K562 (cell line): ENCODE measurements at regions of chr4 and their contacts with region 1.

Region 1: DNA sequence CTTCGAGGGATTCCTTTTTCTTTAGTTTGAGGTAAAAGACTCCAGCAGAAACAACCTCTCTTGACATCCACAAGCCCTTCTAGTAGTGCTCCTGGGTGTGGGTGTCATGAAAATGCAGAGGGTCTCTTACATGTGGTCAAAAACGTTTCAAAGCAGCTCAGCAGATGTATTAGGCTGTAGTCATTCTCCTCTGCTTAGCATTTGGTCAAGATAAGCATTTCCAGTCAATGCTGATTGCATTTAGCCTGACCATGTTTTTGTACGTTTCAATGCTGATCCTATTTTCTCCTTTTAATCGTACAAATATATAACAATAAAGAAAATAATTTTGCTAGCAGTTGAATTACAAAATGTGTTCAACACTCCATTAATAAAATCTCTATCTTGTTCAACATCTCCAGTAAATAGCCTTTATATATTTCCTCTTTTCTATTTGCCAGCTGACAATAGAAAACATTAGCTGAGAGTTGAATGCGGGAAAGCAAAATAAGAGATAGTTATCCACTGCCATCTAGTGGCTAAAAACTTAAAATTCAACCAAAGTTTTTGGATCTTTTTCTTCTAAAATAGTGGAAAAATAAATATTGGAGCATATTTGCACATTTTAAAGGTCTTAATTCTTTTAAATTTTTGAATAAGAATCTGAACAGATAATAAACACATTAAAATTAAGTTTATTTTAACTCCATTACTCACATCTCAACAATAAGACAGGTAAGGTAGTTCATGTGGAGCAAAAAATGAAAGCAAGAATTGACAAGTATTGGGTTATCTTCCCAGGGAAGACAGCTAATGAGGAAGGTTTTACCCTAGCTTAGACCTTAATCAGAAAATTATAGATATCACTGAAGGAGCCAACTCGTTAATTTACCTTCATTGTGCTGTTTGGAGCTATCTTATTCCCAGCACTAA is 15.2 kb upstream of the PACRGL start:
- DNase-seq: peak; percentile 16 to 29 (median 24)
- ATAC-seq: 0 out of 3 replicates have a peak, but pooled peaks have one; percentile 39
- H3K4me3 ChIP-seq: no peak overlapping the region
- H3K27ac ChIP-seq: no peak overlapping the region
- H3K4me1 ChIP-seq: no peaks in the 10 kb centered on the region
- H3K27me3 ChIP-seq: no peaks in the 10 kb centered on the region; a peak in 1 of 5 replicates
- CTCF ChIP-seq: peak in 2 of 3 experiments; percentile 33 to 72; a peak in 3 of 6 replicates
- EP300 ChIP-seq: no peak
- POLR2A ChIP-seq: no peak
- RAD21 ChIP-seq: peak; percentile 68 to 69

Region 2: DNA sequence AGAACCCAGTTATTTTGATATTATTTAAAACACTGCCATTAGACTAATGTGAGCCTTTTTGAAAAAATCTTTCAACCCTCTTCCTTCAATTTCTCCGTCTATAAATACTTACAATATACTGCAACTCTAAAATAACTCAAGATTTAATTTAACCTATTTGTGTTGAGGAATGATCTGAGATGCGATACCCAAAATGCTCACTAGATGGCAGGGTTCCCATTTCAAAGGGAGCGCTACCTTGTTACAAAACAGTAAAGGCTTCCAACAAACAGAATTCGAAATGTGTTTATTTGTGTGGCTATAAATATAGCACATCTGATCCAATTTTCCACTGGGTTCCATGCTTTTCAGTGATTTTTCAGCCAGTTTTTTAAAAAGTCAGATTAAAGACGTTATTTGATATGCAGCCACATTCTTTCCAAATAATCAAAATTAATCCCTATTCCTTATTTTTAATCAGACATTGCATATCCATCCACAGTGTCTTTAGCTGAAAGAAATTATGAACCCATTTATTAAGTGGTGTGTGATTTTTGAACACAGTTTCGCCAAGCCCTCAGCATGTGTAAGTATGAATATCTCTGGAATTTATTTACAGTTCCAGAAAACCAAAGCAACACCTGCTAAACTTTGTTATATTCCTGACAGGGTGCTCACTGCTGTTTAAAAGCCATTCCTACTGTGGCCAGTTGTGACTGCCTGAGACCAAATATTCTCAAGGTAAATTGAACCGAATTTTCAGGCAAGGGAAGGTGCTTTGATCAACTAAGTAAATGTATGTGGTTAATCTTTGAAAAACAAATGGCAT is 1995.6 kb before region 1 on chr4:
- CTCF ChIA-PET with region 1: interaction called, 3 read pairs
- POLR2A ChIA-PET with region 1: no interaction called
- in situ Hi-C with region 1: loop called (anchors 25 kb)
- intact Hi-C with region 1: loop called (anchors 2 kb)
- DNase-seq: peak; percentile 20 to 54 (median 26)
- ATAC-seq: peak; percentile 57; the same call in 1 of the 3 replicates
- H3K4me3 ChIP-seq: no peak overlapping the region
- H3K27ac ChIP-seq: no peak overlapping the region
- H3K4me1 ChIP-seq: no peaks in the 10 kb centered on the region
- H3K27me3 ChIP-seq: no peaks in the 10 kb centered on the region
- CTCF ChIP-seq: peak; percentile 50 to 77 (median 59)
- EP300 ChIP-seq: no peak
- POLR2A ChIP-seq: no peak
- RAD21 ChIP-seq: peak; percentile 72 to 83

Region 3: GRCh38 chr4:19224820-19225219 is 1460.3 kb before region 1 on chr4:
- CTCF ChIA-PET with region 1: no interaction called
- POLR2A ChIA-PET with region 1: no interaction called
- in situ Hi-C with region 1: loop called (anchors 5 kb)
- intact Hi-C with region 1: loop called (anchors 5 kb)
- DNase-seq: peak in 2 of 4 experiments; percentile 3 to 6
- ATAC-seq: no peak
- H3K4me3 ChIP-seq: no peak overlapping the region
- H3K27ac ChIP-seq: no peak overlapping the region
- H3K4me1 ChIP-seq: no peaks in the 10 kb centered on the region
- H3K27me3 ChIP-seq: no peaks in the 10 kb centered on the region
- CTCF ChIP-seq: peak in 1 of 3 experiments; percentile 24; a peak in 2 of 6 replicates
- EP300 ChIP-seq: no peak
- POLR2A ChIP-seq: no peak
- RAD21 ChIP-seq: peak; percentile 24 to 35; a peak in 2 of 4 replicates

Region 4: DNA sequence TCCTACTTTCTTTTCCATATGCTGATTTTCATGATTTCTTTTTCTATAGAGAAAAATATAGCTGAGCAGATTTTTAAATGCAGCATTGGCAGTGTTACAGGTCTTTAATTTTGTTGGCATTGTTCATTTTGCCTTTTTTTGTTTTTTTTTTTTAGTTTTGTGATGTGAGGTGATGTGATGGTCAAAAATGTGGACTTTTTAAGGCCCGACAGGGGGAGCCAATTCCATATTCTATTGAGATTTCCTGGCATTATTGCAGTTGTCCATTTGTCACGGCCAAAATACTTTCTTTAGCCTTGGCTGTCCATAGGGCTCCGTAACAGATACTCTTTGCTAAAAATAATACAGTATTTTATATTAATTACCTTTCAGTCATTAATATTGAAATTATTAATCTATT is 385.6 kb before region 1 on chr4:
- CTCF ChIA-PET with region 1: interaction called, 5 read pairs
- POLR2A ChIA-PET with region 1: no interaction called
- in situ Hi-C with region 1: no loop called
- intact Hi-C with region 1: loop called (anchors 10 kb)
- DNase-seq: peak in 2 of 4 experiments; percentile 8 to 13
- ATAC-seq: no peak
- H3K4me3 ChIP-seq: no peak overlapping the region
- H3K27ac ChIP-seq: no peak overlapping the region
- H3K4me1 ChIP-seq: no peaks in the 10 kb centered on the region
- H3K27me3 ChIP-seq: no peaks in the 10 kb centered on the region
- CTCF ChIP-seq: peak in 1 of 3 experiments; percentile 24; a peak in 1 of 6 replicates
- EP300 ChIP-seq: no peak
- POLR2A ChIP-seq: no peak
- RAD21 ChIP-seq: no peak

Region 5: DNA sequence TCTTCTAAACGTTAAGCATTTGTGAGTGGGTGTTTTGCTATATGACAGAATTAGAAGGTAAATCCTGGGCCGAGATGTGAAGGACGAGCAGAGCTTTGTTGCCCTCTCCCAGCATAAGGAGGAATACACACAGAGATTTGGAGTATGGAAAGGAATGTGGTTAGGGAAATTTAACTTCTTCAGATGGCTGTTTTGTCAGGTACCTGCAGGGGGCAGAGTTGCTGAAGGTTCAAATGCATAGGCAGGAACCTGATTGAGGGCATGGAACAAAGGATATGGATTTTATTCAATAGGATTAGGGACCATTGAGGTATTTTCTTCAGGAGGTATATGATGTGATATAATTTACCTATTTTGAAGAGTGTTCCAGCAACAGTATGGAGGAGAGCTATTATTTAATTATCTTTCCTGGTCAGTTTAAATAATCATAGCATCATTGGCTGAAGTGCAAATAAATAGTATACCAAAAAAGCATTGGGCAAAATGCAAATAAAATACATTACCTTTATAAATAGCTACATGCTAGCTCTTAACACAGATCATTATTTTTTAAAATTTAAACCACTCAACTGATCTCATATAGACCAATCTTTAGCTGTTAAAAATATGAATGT is 289.8 kb before region 1 on chr4:
- CTCF ChIA-PET with region 1: no interaction called
- POLR2A ChIA-PET with region 1: no interaction called
- in situ Hi-C with region 1: no loop called
- intact Hi-C with region 1: loop called (anchors 1 kb)
- DNase-seq: peak; percentile 10 to 40 (median 20)
- ATAC-seq: no peak
- H3K4me3 ChIP-seq: no peak overlapping the region
- H3K27ac ChIP-seq: no peak overlapping the region
- H3K4me1 ChIP-seq: no peaks in the 10 kb centered on the region
- H3K27me3 ChIP-seq: no peaks in the 10 kb centered on the region
- CTCF ChIP-seq: peak; percentile 30 to 52 (median 49); a peak in 4 of 6 replicates
- EP300 ChIP-seq: no peak
- POLR2A ChIP-seq: no peak
- RAD21 ChIP-seq: peak in 1 of 2 experiments; percentile 27; a peak in 1 of 4 replicates

Region 6: DNA sequence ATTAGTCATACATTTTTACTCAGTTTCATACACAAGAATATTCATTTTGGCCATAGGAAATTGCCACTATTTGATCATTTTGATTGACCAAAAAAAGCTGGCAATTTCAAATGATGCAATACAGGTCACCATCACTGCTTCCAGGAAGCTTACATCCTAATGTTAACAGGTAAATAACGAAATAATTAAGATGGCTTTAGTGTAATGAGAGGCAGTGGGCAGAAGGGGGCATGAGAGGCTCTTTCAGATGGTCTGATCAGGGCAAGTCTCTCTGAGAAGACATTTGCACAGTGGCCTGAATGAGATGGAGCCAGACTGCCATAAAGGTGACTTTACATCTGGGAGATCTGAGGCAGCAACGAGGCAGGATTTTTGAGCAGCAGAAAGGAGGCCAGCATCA is 262.7 kb before region 1 on chr4:
- CTCF ChIA-PET with region 1: interaction called, 8 read pairs
- POLR2A ChIA-PET with region 1: no interaction called
- in situ Hi-C with region 1: loop called (anchors 5 kb)
- intact Hi-C with region 1: loop called (anchors 1 kb)
- DNase-seq: peak; percentile 18 to 63 (median 37)
- ATAC-seq: peak; percentile 90
- H3K4me3 ChIP-seq: no peak overlapping the region
- H3K27ac ChIP-seq: no peak overlapping the region
- H3K4me1 ChIP-seq: no peaks in the 10 kb centered on the region
- H3K27me3 ChIP-seq: no peaks in the 10 kb centered on the region
- CTCF ChIP-seq: peak; percentile 48 to 52 (median 48)
- EP300 ChIP-seq: no peak
- POLR2A ChIP-seq: no peak
- RAD21 ChIP-seq: peak; percentile 31 to 52

Region 7: DNA sequence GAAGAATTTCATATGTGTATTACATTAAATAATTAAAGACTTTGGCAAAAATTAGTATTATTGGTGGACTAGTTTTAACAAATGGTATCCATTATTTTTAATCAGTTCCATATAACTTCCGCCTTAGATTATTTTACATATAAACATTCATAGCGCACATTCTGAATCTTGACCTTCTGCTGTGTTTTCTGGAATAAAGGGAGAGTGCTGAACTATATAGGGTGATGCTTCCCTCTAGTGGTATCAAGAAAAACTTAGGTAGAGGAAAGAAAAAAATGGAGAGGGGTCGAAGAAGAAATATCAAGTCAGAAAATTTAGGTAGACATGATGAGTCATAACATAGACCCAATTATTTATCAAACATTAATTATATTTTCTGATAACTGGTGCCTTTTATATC is 140.5 kb before region 1 on chr4:
- CTCF ChIA-PET with region 1: no interaction called
- POLR2A ChIA-PET with region 1: no interaction called
- in situ Hi-C with region 1: no loop called
- intact Hi-C with region 1: loop called (anchors 2 kb)
- DNase-seq: peak in 3 of 4 experiments; percentile 10 to 21 (median 13)
- ATAC-seq: peak; percentile 54; the same call in 2 of the 3 replicates
- H3K4me3 ChIP-seq: no peak overlapping the region
- H3K27ac ChIP-seq: no peak overlapping the region
- H3K4me1 ChIP-seq: no peaks in the 10 kb centered on the region
- H3K27me3 ChIP-seq: no peaks in the 10 kb centered on the region
- CTCF ChIP-seq: peak; percentile 19 to 57 (median 34); a peak in 3 of 6 replicates
- EP300 ChIP-seq: no peak
- POLR2A ChIP-seq: no peak
- RAD21 ChIP-seq: peak in 1 of 2 experiments; percentile 53; a peak in 3 of 4 replicates

Region 8: DNA sequence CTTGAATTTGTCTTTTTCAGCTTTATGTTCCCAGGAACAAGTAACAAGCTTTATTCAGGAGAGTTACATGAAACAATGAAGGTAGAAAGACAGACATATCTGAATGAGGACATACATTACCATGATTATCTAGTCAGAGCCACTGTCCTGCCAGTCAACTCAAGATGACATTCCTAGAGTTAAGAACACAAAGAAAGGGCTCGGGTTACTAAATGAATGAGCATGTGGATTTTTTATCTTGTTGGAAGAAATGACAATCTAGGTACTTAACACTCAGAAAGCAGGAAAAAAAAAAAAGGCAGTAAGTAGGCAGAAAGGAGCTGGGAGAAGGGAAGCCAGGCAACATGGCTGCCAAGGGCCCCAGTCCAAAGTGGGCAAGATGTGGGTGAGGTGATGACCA is 12.8 kb before region 1 on chr4:
- CTCF ChIA-PET with region 1: no interaction called
- POLR2A ChIA-PET with region 1: no interaction called
- in situ Hi-C with region 1: no loop called
- intact Hi-C with region 1: no loop called
- DNase-seq: no peak
- ATAC-seq: no peak
- H3K4me3 ChIP-seq: no peak overlapping the region
- H3K27ac ChIP-seq: no peak overlapping the region
- H3K4me1 ChIP-seq: no peaks in the 10 kb centered on the region
- H3K27me3 ChIP-seq: no peaks in the 10 kb centered on the region
- CTCF ChIP-seq: no peak
- EP300 ChIP-seq: no peak
- POLR2A ChIP-seq: no peak
- RAD21 ChIP-seq: no peak

Region 9: DNA sequence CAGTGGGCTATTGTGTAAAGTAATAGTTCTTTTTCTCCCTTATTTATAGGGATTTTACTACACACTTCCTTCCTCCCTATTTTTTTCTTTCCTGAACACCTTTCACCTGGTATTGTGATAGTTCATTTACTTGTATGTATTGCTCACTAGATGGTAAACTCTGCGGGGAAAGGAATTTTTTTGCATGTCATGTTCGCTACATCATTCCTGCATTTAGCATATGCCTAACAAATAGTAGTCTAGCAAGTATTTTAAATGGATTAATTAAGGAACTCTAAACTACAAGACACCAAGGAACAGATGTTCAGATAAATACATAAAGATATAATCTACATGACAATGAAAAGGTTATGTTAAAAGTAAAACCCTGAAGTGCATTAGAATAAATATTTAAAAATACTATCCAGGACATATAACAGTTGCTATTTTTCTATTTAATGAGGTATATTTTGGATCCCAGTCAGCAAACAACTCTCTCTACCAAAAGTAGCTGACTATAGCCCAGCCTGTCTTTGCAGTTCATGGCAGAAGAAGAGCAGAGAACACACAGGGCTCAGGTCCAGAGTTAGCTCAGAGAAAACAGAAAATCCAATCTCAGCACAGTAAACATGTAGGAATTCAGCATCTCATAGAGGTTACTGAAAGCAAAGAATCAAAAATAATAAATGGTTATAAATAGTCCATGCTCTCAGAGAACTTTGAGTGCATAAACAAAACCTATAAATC is 103.0 kb after region 1 on chr4:
- CTCF ChIA-PET with region 1: no interaction called
- POLR2A ChIA-PET with region 1: no interaction called
- in situ Hi-C with region 1: no loop called
- intact Hi-C with region 1: no loop called
- DNase-seq: no peak
- ATAC-seq: no peak
- H3K4me3 ChIP-seq: no peak overlapping the region
- H3K27ac ChIP-seq: no peak overlapping the region
- H3K4me1 ChIP-seq: no peaks in the 10 kb centered on the region
- H3K27me3 ChIP-seq: no peaks in the 10 kb centered on the region
- CTCF ChIP-seq: no peak
- EP300 ChIP-seq: no peak
- POLR2A ChIP-seq: no peak
- RAD21 ChIP-seq: no peak

Region 10: DNA sequence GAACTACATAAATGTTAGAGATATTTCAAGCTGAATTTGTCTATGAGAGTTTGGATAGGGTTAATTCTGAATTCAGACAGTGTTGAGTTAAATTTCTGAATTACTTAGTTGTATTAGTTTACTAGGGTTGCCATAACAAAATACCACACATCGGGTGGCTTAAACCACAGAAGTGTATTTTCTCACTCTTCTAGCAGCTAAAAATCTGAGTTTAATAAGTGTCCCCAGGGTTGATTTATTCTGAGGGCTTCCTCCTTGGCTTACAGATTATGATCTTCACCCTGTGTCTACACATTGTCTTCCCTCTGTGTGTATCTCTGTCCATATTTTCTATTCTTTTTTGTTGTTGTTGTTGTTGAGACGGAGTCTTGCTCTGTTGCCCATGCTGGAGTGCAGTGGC is 333.7 kb after region 1 on chr4:
- CTCF ChIA-PET with region 1: no interaction called
- POLR2A ChIA-PET with region 1: no interaction called
- in situ Hi-C with region 1: no loop called
- intact Hi-C with region 1: no loop called
- DNase-seq: no peak
- ATAC-seq: no peak
- H3K4me3 ChIP-seq: no peak overlapping the region
- H3K27ac ChIP-seq: no peak overlapping the region
- H3K4me1 ChIP-seq: no peaks in the 10 kb centered on the region
- H3K27me3 ChIP-seq: no peaks in the 10 kb centered on the region
- CTCF ChIP-seq: no peak
- EP300 ChIP-seq: no peak
- POLR2A ChIP-seq: no peak
- RAD21 ChIP-seq: no peak

Region 11: GRCh38 chr4:21113496-21114223 is 428.6 kb after region 1 on chr4:
- CTCF ChIA-PET with region 1: no interaction called
- POLR2A ChIA-PET with region 1: no interaction called
- in situ Hi-C with region 1: no loop called
- intact Hi-C with region 1: no loop called
- DNase-seq: no peak
- ATAC-seq: no peak
- H3K4me3 ChIP-seq: no peak overlapping the region
- H3K27ac ChIP-seq: no peak overlapping the region
- H3K4me1 ChIP-seq: no peaks in the 10 kb centered on the region
- H3K27me3 ChIP-seq: no peaks in the 10 kb centered on the region
- CTCF ChIP-seq: no peak
- EP300 ChIP-seq: no peak
- POLR2A ChIP-seq: no peak
- RAD21 ChIP-seq: no peak